ENCODE measurements at regions of chrX and their contacts with region 1.

Region 1: GRCh38 chrX:53422086-53422860 is at the start of gene SMC1A:
- DNase-seq: peak; percentile 86 to 98 (median 96)
- ATAC-seq: peak; percentile 89
- H3K4me3 ChIP-seq: peak within 1 kb of the TSS; percentile 92 to 94
- H3K4me3 Mint-ChIP-seq: peak within 1 kb of the TSS; percentile 94
- H3K27ac ChIP-seq: peak within 1 kb of the TSS; percentile 95 to 99
- H3K27ac Mint-ChIP-seq: peak within 1 kb of the TSS; percentile 95
- H3K4me1 ChIP-seq: peaks cover 18% of the 10 kb centered on the region
- H3K4me1 Mint-ChIP-seq: peaks cover 33% of the 10 kb centered on the region
- H3K27me3 ChIP-seq: no peaks in the 10 kb centered on the region
- H3K27me3 Mint-ChIP-seq: no peaks in the 10 kb centered on the region
- CTCF ChIP-seq: no peak
- total RNA-seq, gene SMC1A: 23.7 to 25.3 TPM

Region 2: GRCh38 chrX:53362450-53362849 is 59.8 kb before region 1 on chrX:
- CTCF ChIA-PET with region 1: no interaction called
- POLR2A ChIA-PET with region 1: no interaction called
- intact Hi-C with region 1: no loop called
- DNase-seq: peak in 2 of 9 experiments; percentile 6 to 39
- ATAC-seq: no peak
- H3K4me3 ChIP-seq: no peak overlapping the region
- H3K4me3 Mint-ChIP-seq: no peak overlapping the region
- H3K27ac ChIP-seq: no peak overlapping the region
- H3K27ac Mint-ChIP-seq: no peak overlapping the region
- H3K4me1 ChIP-seq: no peaks in the 10 kb centered on the region
- H3K4me1 Mint-ChIP-seq: peaks cover 2% of the 10 kb centered on the region
- H3K27me3 ChIP-seq: no peaks in the 10 kb centered on the region
- H3K27me3 Mint-ChIP-seq: no peaks in the 10 kb centered on the region
- CTCF ChIP-seq: no peak

Region 3: DNA sequence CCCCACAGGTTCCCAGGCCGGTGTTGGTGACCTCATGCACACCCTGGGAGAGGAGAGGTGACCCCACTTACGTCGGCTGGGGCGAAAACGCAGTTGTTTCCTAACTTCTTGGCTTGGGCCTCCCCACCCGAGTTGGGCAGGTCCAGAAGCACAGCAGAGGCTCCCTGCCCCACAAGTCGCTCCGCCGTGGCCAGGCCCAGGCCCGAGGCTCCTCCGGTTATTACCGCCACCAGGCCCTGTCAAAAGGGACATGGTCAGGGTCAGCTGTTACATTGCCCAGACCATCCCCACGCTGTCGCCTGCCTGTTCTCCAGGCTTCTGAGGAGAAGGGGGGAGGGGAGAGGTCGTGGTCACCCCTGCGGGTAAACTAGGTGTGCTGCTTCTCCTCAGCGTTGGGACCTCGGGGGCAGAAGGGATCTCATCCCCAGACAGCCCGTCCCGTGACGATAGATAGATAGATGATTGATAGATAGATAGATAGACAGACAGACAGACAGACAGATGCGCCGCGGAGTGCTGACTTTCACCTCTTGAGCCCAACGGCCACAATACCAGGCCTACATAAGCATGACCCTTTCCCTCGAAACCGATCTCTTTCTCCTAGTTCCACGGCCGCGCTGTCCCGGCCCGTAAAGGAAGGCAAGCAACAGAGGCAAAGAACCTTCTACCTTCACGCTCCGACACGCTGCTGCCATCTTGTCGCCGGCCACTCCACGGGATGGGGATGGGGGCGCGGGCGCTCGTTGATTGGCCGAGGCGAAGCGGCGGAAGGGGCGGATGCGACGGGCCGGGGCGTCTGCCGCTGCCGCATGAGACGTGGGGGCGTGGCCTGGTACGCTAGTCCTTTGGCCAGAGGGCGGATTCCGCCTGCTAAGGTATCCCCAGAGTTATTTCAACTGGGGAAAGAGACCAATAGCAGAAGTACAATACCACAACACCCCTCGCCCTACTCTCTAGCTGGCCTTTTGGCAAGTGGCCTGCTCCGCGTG is 11.7 kb after region 1 on chrX and contains the start of gene HSD17B10:
- CTCF ChIA-PET with region 1: interaction called, 5 read pairs
- POLR2A ChIA-PET with region 1: interaction called, 7 read pairs
- intact Hi-C with region 1: loop called (anchors 1 kb)
- DNase-seq: peak; percentile 59 to 91 (median 84)
- ATAC-seq: peak; percentile 97
- H3K4me3 ChIP-seq: peak within 1 kb of the TSS; percentile 55 to 74
- H3K4me3 Mint-ChIP-seq: peak within 1 kb of the TSS; percentile 97
- H3K27ac ChIP-seq: peak within 1 kb of the TSS; percentile 71 to 81
- H3K27ac Mint-ChIP-seq: peak within 1 kb of the TSS; percentile 97
- H3K4me1 ChIP-seq: peaks cover 10% of the 10 kb centered on the region
- H3K4me1 Mint-ChIP-seq: peaks cover 16% of the 10 kb centered on the region
- H3K27me3 ChIP-seq: no peaks in the 10 kb centered on the region
- H3K27me3 Mint-ChIP-seq: no peaks in the 10 kb centered on the region
- CTCF ChIP-seq: no peak
- total RNA-seq, gene HSD17B10: 23.4 to 26.2 TPM

Measured in CD8-positive, alpha-beta T cell (primary cell).